ENCODE measurements at regions of chr22 and their contacts with region 1.

Region 1: GRCh38 chr22:31537019-31537535 is 40.7 kb downstream of the SFI1 start:
- DNase-seq: peak; percentile 79
- H3K4me3 Mint-ChIP-seq: peak overlapping the region; percentile 8
- H3K27ac Mint-ChIP-seq: peak overlapping the region; percentile 89
- H3K4me1 Mint-ChIP-seq: peaks cover 64% of the 10 kb centered on the region
- H3K27me3 Mint-ChIP-seq: no peaks in the 10 kb centered on the region

Region 2: DNA sequence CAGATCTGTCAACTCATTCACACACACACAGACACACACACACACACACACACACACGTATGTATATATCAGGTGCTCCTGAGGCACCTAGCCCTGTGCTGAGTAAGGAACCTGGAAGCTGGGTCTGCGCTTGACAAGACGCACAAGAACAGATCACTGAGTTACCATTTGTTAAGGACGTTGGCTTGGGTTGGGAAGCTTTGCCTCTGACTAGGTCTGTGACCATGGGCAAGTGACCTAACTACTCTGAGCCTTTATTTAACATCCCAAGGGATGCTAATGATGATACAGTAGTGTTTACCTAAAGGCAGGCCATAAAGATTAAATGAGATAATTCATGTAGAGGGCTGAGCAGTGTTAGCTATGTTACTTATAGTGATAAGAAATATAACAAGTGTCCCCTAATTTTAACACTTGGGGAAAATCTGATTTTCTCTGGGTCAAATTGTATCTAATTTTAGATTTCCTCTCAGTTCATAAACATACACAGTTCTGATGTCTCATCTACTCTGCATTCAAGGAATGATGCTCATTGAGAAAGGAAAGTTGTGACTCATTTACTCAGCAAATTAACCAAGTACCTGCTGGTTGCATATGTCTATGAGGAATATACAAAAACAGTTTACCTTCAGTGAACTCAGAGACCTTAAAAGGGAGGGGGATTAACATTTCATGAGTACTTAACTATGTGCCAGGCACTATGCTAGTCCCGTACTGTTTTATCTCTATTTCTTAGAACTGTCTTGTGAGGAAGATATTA is 363.5 kb before region 1 on chr22:
- CTCF ChIA-PET with region 1: no interaction called
- intact Hi-C with region 1: loop called (anchors 1 kb)
- DNase-seq: no peak
- H3K4me3 Mint-ChIP-seq: peak overlapping the region; percentile 23
- H3K27ac Mint-ChIP-seq: peak overlapping the region; percentile 84
- H3K4me1 Mint-ChIP-seq: peaks cover 47% of the 10 kb centered on the region
- H3K27me3 Mint-ChIP-seq: no peaks in the 10 kb centered on the region

Region 3: GRCh38 chr22:31489604-31490495 is 47.2 kb before region 1 on chr22 and contains the start of gene EIF4ENIF1:
- CTCF ChIA-PET with region 1: interaction called, 4 read pairs
- intact Hi-C with region 1: loop called (anchors 1 kb)
- DNase-seq: peak; percentile 88
- H3K4me3 Mint-ChIP-seq: peak within 1 kb of the TSS; percentile 83
- H3K27ac Mint-ChIP-seq: peak within 1 kb of the TSS; percentile 97
- H3K4me1 Mint-ChIP-seq: peaks cover 50% of the 10 kb centered on the region
- H3K27me3 Mint-ChIP-seq: no peaks in the 10 kb centered on the region
- total RNA-seq, gene EIF4ENIF1: 28.1 to 29.0 TPM

Region 4: DNA sequence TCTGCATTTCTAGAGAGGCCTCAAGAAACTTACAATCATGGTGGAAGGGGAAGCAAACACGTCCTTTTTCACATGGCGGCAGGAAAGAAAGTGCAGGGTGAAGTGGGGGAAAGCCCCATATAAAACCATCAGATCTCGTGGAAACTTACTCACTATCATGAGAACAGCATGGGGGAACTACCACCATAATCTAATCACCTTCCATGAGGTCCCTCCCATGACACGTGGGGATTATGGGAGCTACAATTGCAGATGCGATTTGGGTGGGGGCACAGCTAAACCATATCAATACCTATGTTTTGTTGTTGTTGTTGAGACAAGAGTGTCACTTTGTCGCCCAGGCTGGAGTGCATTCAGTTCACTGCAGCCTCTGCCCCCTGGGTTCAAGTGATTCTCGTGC is 10.8 kb before region 1 on chr22:
- CTCF ChIA-PET with region 1: no interaction called
- intact Hi-C with region 1: loop called (anchors 1 kb)
- DNase-seq: peak; percentile 76
- H3K4me3 Mint-ChIP-seq: no peak overlapping the region
- H3K27ac Mint-ChIP-seq: peak overlapping the region; percentile 94
- H3K4me1 Mint-ChIP-seq: peaks cover 65% of the 10 kb centered on the region
- H3K27me3 Mint-ChIP-seq: no peaks in the 10 kb centered on the region

Region 5: GRCh38 chr22:31611061-31611760 is 74.1 kb after region 1 on chr22:
- CTCF ChIA-PET with region 1: no interaction called
- intact Hi-C with region 1: no loop called
- DNase-seq: no peak
- H3K4me3 Mint-ChIP-seq: no peak overlapping the region
- H3K27ac Mint-ChIP-seq: no peak overlapping the region
- H3K4me1 Mint-ChIP-seq: peaks cover 13% of the 10 kb centered on the region
- H3K27me3 Mint-ChIP-seq: no peaks in the 10 kb centered on the region

Region 6: GRCh38 chr22:31646186-31647089 is 109.4 kb after region 1 on chr22:
- CTCF ChIA-PET with region 1: no interaction called
- intact Hi-C with region 1: loop called (anchors 1 kb)
- DNase-seq: peak; percentile 76
- H3K4me3 Mint-ChIP-seq: no peak overlapping the region
- H3K27ac Mint-ChIP-seq: peak overlapping the region; percentile 91
- H3K4me1 Mint-ChIP-seq: peaks cover 53% of the 10 kb centered on the region
- H3K27me3 Mint-ChIP-seq: no peaks in the 10 kb centered on the region

Measured in activated naive CD4-positive, alpha-beta T cell treated with anti-CD3 and anti-CD28 coated beads for 36 hours (primary cell).